Cardiac septum (tissue), 1 donor: ENCODE measurements at regions of chr22 and their contacts with region 1.

Region 1: GRCh38 chr22:38524429-38524828 is 18.3 kb upstream of the DDX17 start:
- DNase-seq: no peak

Region 2: GRCh38 chr22:38479096-38479837 is 45.2 kb before region 1 on chr22:
- intact Hi-C with region 1: loop called (anchors 5 kb)
- DNase-seq: no peak

Region 3: DNA sequence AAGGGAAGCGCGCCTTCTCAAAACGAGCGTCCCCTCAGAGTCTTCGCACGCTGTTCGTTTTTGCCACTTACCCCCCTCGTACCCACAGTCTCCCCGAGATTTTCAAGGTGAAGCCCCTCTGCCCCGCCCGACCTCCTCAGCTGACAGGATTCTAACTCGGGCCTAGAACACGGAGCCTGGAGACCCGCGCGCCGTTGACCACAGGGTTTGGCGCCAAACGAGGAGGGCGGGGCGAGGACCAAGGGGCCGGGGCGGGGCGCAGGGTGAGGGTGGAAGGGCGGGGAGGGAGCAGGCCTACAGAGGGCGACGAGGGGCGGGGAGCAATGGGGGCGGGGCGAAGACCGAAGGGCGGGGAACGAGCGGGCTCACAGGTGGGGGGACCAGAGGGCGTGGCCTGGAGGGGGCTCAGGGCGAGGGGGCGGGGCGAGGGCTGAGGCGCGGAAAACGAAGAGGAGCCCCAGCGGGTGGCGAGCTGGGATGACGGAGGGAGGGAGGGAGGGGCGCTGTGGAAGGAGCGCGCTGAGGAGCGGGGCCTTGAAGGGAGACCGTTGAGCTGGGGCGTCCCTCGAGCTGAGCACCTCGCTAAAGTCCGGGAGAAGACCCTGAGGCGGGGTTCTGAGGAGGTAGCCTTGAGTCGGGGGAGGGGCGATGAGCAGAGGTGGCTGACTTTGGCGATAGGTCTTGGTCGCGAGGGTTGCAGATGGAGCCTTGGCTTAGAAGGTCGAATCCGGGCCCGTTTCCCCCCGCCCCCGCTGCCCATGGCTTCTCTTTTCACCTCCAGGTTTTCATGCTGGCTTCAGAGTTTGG is 45.7 kb after region 1 on chr22 and contains the start of gene DMC1:
- intact Hi-C with region 1: no loop called
- DNase-seq: peak; percentile 95
- total RNA-seq, gene DMC1: 1.9 TPM